ENCODE measurements at regions of chr13 and their contacts with region 1.

Region 1: GRCh38 chr13:78576261-78576660 is 27.1 kb downstream of the POU4F1 start:
- DNase-seq: no peak
- ATAC-seq: no peak
- H3K4me3 ChIP-seq: no peak overlapping the region
- H3K4me3 Mint-ChIP-seq: no peak overlapping the region
- H3K27ac ChIP-seq: no peak overlapping the region
- H3K27ac Mint-ChIP-seq: no peak overlapping the region
- H3K4me1 ChIP-seq: no peaks in the 10 kb centered on the region
- H3K4me1 Mint-ChIP-seq: no peaks in the 10 kb centered on the region
- H3K27me3 ChIP-seq: peaks cover 8 to 16% of the 10 kb centered on the region in 2 experiments
- H3K27me3 Mint-ChIP-seq: peaks cover 52% of the 10 kb centered on the region
- CTCF ChIP-seq: no peak

Region 2: DNA sequence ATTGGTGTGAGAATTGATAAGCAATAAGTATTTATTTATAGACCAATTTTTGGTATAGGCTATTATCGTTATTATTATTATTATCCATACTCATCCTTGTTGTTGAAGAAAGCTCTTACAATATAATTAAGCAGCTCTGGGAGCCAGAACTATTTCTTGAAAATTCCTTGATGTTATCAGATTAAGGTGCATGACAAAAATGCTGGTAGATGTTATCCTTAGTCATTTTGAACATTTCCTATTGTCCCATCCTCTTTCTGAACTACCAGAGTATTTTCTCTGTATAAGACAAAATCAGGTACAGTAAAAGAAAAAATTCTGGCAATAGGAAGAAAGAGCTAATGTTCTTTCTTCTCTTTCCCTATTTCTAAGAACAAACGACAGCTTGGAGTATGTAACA is 303.1 kb before region 1 on chr13:
- CTCF ChIA-PET with region 1: no interaction called
- POLR2A ChIA-PET with region 1: no interaction called
- intact Hi-C with region 1: no loop called
- DNase-seq: no peak
- ATAC-seq: no peak
- H3K4me3 ChIP-seq: no peak overlapping the region
- H3K4me3 Mint-ChIP-seq: no peak overlapping the region
- H3K27ac ChIP-seq: no peak overlapping the region
- H3K27ac Mint-ChIP-seq: no peak overlapping the region
- H3K4me1 ChIP-seq: no peaks in the 10 kb centered on the region
- H3K4me1 Mint-ChIP-seq: no peaks in the 10 kb centered on the region
- H3K27me3 ChIP-seq: no peaks in the 10 kb centered on the region
- H3K27me3 Mint-ChIP-seq: no peaks in the 10 kb centered on the region
- CTCF ChIP-seq: no peak

Region 3: GRCh38 chr13:79851318-79851717 is 1275.1 kb after region 1 on chr13:
- CTCF ChIA-PET with region 1: no interaction called
- POLR2A ChIA-PET with region 1: no interaction called
- intact Hi-C with region 1: loop called in 1 of 2 experiments (anchors 10 kb)
- DNase-seq: no peak
- ATAC-seq: no peak
- H3K4me3 ChIP-seq: no peak overlapping the region
- H3K4me3 Mint-ChIP-seq: no peak overlapping the region
- H3K27ac ChIP-seq: no peak overlapping the region
- H3K27ac Mint-ChIP-seq: no peak overlapping the region
- H3K4me1 ChIP-seq: no peaks in the 10 kb centered on the region
- H3K4me1 Mint-ChIP-seq: no peaks in the 10 kb centered on the region
- H3K27me3 ChIP-seq: no peaks in the 10 kb centered on the region
- H3K27me3 Mint-ChIP-seq: no peaks in the 10 kb centered on the region
- CTCF ChIP-seq: no peak

Measured in CD4-positive, alpha-beta T cell (primary cell).